ENCODE measurements at regions of chr20 and their contacts with region 1.

Region 1: GRCh38 chr20:41411391-41411847 is 44.8 kb upstream of the EMILIN3 start:
- DNase-seq: no peak
- H3K4me3 ChIP-seq: no peak overlapping the region
- H3K27ac ChIP-seq: peak overlapping the region; percentile 80
- H3K4me1 ChIP-seq: peaks cover 53% of the 10 kb centered on the region
- H3K27me3 ChIP-seq: no peaks in the 10 kb centered on the region
- CTCF ChIP-seq: peak; percentile 62

Region 2: GRCh38 chr20:40980106-40980827 is 431.2 kb before region 1 on chr20:
- intact Hi-C with region 1: loop called (anchors 10 kb)
- DNase-seq: no peak
- H3K4me3 ChIP-seq: no peak overlapping the region
- H3K27ac ChIP-seq: no peak overlapping the region
- H3K4me1 ChIP-seq: no peaks in the 10 kb centered on the region
- H3K27me3 ChIP-seq: peaks cover 6% of the 10 kb centered on the region
- CTCF ChIP-seq: no peak

Region 3: DNA sequence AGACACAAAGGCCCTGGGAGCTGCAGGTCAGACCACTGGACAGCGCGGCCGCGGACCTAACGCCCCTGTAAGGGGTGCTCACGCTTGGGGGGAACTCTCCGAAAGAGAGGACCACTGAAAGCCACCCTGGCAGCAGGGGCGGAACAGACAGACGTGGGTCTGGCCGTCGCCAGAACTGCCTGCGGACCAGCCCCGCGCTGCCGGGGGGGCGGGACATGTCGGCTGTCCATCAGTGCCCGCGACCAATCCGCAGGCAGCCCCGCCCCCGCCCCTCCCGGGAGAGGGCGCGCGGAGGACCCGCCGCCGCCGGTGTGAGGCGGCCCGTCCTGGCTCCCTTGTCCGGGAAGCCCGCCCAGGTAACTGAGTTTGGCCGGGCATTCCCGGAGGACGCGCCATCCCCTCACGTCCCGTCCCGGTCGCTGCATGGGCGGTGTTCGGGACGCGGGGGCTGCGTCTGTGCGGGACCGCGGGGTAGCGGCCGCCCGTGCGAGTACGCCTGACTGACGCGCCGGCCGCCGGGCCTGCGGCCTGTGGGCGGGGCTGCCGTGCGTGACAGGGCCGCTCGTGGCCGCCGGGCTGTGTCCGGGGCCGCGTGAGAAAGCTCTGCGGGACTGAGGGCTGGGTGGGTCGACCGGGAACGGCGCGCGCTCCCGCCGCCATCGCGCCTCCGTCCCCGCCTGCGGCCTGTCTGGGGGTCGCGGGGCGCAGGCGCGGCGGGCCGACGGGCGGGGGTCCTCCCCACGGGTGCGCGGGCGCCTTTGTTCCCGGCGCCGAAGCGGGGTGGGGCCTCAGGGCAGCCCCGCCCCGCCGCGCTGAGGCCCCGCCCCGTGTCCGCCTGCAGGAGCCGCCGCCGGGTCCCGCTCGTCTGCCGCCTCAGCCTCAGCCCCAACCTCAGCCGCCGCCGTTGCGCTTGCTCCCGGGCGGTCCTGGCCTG is 274.5 kb before region 1 on chr20 and contains the start of gene PLCG1:
- intact Hi-C with region 1: loop called (anchors 10 kb)
- DNase-seq: peak; percentile 92
- H3K4me3 ChIP-seq: peak within 1 kb of the TSS; percentile 77
- H3K27ac ChIP-seq: peak within 1 kb of the TSS; percentile 99
- H3K4me1 ChIP-seq: peaks cover 68% of the 10 kb centered on the region
- H3K27me3 ChIP-seq: no peaks in the 10 kb centered on the region
- CTCF ChIP-seq: no peak
- total RNA-seq, gene PLCG1: 46.1 TPM

Region 4: GRCh38 chr20:41339507-41340326 is 71.7 kb before region 1 on chr20:
- intact Hi-C with region 1: loop called (anchors 5 kb)
- DNase-seq: peak; percentile 81
- H3K4me3 ChIP-seq: peak overlapping the region; percentile 72
- H3K27ac ChIP-seq: peak overlapping the region; percentile 91
- H3K4me1 ChIP-seq: peaks cover 49% of the 10 kb centered on the region
- H3K27me3 ChIP-seq: no peaks in the 10 kb centered on the region
- CTCF ChIP-seq: peak; percentile 99

Region 5: DNA sequence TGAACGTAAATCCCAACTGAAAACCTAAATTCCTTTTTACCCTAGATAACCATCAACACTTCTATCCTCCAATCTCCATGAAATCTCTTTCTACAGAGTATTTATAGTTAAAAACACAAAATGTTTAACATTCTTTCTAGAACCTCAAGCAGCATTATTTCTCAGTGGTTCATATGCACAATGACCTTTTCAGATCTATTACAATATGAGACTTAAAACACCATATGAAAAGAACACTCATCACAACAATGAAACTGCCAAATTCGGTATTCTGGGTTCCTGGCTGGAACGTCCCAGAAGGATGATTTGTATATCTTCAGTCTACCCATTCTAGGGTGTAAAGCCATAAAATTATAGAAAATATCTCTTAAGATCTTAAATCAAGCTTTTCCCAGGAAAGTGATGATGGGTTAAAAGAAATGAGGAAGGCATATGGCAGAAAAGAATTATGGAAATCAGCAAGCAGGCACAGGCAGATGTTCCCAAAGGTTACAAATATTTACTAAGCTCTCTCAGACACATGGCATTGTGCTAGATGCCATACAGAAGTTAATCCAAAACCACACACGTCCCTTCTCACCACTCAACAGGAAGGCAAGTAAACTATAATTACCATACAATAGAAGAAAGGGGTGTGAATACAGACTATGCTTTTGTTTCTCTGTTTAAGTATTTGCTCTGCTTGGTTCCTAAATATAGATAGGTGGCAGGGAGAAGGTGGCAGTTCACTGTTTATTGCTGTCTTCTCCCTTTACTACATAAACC is 88.7 kb after region 1 on chr20:
- intact Hi-C with region 1: no loop called
- DNase-seq: no peak
- H3K4me3 ChIP-seq: no peak overlapping the region
- H3K27ac ChIP-seq: no peak overlapping the region
- H3K4me1 ChIP-seq: peaks cover 19% of the 10 kb centered on the region
- H3K27me3 ChIP-seq: no peaks in the 10 kb centered on the region
- CTCF ChIP-seq: no peak

Measured in left ventricle myocardium inferior (tissue), 1 donor.